Gastrocnemius medialis (tissue), 4 donors: ENCODE measurements at regions of chr11 and their contacts with region 1.

Region 1: DNA sequence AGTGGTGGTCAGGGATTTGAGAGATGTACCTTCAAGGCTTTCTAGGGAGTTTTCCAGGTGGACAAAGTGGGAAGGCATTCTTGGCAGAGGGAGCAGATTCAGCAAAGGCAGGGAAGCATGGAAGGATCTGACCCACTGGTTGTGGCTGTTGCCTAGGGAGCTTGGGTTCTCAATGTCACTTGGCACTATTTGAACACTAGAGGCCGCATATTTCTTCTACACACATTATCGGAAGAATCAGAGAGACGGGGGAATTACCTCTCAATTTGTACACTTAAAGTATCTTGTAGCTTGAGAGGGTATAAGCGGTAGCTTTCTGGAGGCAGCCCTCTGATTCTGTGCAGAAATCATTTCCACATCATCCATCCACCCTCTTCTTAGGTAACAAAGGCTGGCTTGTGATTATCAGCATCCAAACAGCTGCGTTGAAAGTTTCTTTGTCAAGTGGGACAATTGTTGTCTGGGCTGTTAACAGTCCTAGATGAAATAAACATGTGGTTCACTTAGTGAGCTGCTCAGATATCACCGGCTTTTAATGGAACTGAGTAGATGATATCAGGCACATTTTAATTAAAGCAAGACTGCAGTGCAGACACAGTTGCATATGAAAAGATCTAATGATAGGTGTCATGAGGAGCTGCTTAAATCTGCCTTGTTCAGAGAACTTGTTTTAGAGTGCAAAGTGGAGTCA is 2.6 kb downstream of the NELL1 start:
- DNase-seq: no peak
- ATAC-seq: no peak
- H3K4me3 ChIP-seq: no peak overlapping the region
- H3K27ac ChIP-seq: no peak overlapping the region
- H3K4me1 ChIP-seq: peaks cover 0 to 9% of the 10 kb centered on the region in 2 donors
- H3K27me3 ChIP-seq: peaks cover 45 to 57% (median 52%) of the 10 kb centered on the region in 3 donors
- CTCF ChIP-seq: no peak
- POLR2A ChIP-seq: no peak

Region 2: DNA sequence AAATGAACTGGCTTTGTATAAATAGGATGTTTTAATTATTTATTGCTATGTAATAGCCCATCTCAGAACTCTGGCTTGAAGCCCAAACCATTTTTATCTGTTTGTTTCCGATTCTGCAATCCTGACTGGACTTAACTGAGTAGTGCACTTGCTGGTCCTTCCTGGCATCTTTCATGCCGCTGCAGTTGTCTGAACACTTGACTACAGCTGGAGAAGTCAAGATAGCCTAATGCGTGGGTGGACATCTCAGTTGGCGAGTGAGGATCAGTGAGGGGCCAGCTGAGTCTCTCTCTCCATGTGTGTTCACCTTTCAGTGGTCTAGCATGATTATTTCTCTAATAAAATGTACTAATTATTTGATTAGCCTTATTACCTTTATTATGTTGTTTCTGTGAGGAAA is 178.7 kb before region 1 on chr11:
- in situ Hi-C with region 1: no loop called
- intact Hi-C with region 1: no loop called
- DNase-seq: no peak
- ATAC-seq: no peak
- H3K4me3 ChIP-seq: no peak overlapping the region
- H3K27ac ChIP-seq: no peak overlapping the region
- H3K4me1 ChIP-seq: no peaks in the 10 kb centered on the region
- H3K27me3 ChIP-seq: no peaks in the 10 kb centered on the region
- CTCF ChIP-seq: no peak
- POLR2A ChIP-seq: no peak

Region 3: GRCh38 chr11:21088930-21089329 is 416.9 kb after region 1 on chr11:
- in situ Hi-C with region 1: no loop called
- intact Hi-C with region 1: no loop called
- DNase-seq: no peak
- ATAC-seq: no peak
- H3K4me3 ChIP-seq: no peak overlapping the region
- H3K27ac ChIP-seq: no peak overlapping the region
- H3K4me1 ChIP-seq: no peaks in the 10 kb centered on the region
- H3K27me3 ChIP-seq: peaks cover 0 to 4% (median 0%) of the 10 kb centered on the region in 3 donors
- CTCF ChIP-seq: no peak
- POLR2A ChIP-seq: no peak

Region 4: GRCh38 chr11:21385669-21386068 is 713.7 kb after region 1 on chr11:
- in situ Hi-C with region 1: no loop called
- intact Hi-C with region 1: loop called (anchors 5 kb)
- DNase-seq: no peak
- ATAC-seq: no peak
- H3K4me3 ChIP-seq: no peak overlapping the region
- H3K27ac ChIP-seq: no peak overlapping the region
- H3K4me1 ChIP-seq: no peaks in the 10 kb centered on the region
- H3K27me3 ChIP-seq: no peaks in the 10 kb centered on the region
- CTCF ChIP-seq: no peak
- POLR2A ChIP-seq: no peak